CD4-positive, alpha-beta memory T cell (primary cell): ENCODE measurements at regions of chr1 and their contacts with region 1.

Region 1: DNA sequence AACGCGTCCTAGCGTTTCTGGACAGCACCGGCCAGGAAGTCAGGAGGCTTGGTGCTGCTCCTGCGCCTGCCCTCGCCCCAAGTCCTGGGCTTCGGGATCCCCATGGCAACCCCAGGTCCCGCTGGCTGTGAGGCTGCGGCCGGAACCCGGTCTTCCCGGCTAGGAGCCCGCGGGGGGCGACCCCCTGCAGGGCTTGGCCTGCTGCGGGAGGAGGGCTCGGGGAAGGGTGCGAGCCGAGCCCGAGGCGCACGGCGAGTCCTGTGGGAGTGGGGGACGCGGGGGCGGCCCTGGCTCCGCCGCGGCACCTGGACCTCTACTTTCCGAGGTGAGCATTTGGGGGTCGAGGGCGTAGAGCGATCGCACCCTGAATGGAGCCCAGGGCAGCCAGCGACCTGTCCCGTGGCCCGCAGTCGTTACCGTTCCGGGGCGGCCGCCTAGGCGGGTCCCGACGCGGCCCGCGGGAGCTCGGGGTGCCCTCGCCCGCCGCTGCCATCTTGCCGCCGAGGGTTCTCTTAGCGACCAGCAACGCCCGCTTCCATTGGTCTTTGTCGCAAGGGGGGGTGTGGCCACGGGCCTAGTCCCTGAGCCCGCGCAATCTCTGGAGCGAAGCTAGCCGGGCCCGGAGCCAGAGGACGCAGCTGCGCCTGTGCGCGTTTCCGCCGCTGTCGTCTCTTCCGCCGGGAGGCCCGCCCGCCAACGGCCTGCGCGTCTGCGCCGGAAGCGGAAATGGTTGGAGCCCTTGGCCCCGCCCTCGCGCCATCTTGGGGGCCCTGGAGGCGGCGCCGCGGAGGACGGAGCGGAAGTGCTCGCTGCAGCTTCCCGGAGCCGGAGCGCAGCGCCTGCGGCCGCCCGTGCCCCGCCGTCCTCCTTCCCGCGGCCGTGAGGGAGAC is at the starts of genes MORN1 and RER1:
- DNase-seq: peak; percentile 98 to 100 (median 99)
- H3K4me3 ChIP-seq: peak within 1 kb of the TSS; percentile 57 to 75
- H3K4me3 Mint-ChIP-seq: peak within 1 kb of the TSS; percentile 85 to 93 (median 90)
- H3K27ac ChIP-seq: peak within 1 kb of the TSS; percentile 76
- H3K27ac Mint-ChIP-seq: peak within 1 kb of the TSS; percentile 87 to 95 (median 93)
- H3K4me1 ChIP-seq: peaks cover 37% of the 10 kb centered on the region
- H3K4me1 Mint-ChIP-seq: peaks cover 20 to 49% (median 38%) of the 10 kb centered on the region in 4 donors
- H3K27me3 ChIP-seq: no peaks in the 10 kb centered on the region
- H3K27me3 Mint-ChIP-seq: no peaks in the 10 kb centered on the region
- total RNA-seq, gene MORN1: 12.5 to 15.3 TPM
- total RNA-seq, gene RER1: 149 to 151 TPM

Region 2: DNA sequence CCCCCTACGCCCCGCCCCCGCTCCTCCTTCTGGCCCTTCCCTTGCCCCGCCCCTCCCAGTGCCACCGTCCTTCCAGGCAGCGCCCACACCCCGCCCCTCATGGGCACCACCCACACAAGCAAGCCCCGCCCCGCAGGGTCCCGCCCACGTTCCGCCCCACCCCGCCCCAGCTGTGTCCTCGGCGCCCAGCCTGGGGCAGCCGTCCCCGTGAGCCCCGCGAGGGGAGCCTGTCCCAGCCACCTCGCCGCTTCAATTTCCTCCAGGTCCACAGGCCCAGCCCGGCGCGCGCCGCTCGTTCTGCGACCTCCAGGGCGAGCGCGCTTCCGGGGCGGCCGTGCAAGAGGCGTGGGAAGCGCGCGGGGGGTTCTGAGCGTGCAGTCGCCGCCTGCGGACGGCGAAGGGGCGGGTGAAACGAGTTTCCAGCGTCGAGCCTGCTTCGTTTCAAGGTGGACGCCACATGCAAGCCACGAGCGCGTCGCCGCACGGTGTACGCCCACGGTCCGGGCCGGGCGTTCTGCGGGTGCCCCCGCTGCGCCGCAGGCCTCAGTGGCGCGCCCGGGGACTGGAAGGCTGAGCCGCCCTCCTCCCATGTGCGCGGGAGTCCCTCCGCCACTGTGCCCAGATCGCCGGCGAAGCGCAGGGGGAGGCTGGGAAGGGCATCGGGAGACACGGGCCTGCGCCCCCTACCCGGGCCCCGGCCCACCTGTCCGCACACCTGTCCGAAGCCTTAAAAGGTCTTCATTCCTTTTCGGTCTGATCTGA is 185.9 kb before region 1 on chr1:
- CTCF ChIA-PET with region 1: no interaction called
- POLR2A ChIA-PET with region 1: interaction called, 19 read pairs
- intact Hi-C with region 1: loop called (anchors 1 kb)
- DNase-seq: peak; percentile 90 to 95 (median 91)
- H3K4me3 ChIP-seq: peak overlapping the region; percentile 6 to 47
- H3K4me3 Mint-ChIP-seq: peak overlapping the region; percentile 48 to 71 (median 68)
- H3K27ac ChIP-seq: peak overlapping the region; percentile 38
- H3K27ac Mint-ChIP-seq: peak overlapping the region in 3 of 7 donors; percentile 35 to 79 (median 62)
- H3K4me1 ChIP-seq: peaks cover 26% of the 10 kb centered on the region
- H3K4me1 Mint-ChIP-seq: peaks cover 0 to 15% (median 3%) of the 10 kb centered on the region in 4 donors
- H3K27me3 ChIP-seq: no peaks in the 10 kb centered on the region
- H3K27me3 Mint-ChIP-seq: no peaks in the 10 kb centered on the region

Region 3: DNA sequence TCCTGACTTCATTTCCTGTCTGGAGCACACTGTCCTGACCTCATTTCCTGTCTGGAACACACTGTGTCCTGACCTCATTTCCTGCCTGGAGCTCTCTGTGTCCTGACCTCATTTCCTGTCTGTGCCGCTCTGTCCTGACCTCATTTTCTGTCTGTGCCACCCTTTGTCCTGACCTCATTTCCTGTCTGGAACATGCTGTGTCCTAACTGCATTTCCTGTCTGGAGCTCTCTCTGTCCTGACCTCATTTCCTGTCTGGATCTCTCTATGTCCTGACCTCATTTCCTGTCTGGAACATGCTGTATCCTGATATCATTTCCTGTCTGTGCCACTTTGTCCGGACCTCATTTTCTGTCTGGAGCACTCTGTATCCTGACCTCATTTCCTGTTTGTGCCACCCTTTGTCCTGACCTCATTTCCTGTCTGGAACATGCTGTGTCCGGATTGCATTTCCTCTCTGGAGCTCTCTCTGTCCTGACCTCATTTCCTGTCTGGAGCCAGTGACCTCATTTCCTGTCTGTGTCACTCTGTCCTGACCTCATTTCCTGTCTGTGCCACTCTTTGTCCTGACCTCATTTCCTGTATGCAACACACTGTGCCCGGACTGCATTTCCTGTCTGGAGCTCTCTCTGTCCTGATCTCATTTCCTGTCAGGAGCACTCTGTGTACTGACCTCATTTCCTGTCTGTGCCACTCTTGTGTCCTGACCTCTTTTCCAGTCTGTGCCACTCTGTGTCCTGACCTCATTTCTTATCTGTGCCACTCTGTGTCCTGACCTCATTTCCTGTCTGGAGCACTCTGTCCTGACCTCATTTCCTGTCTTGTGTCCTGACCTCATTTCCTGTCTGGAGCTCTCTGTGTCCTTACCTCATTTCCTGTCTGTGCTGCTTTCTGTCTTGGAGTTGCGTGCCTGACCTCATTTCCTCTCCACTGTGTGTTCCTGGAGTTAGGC is 135.6 kb before region 1 on chr1:
- CTCF ChIA-PET with region 1: no interaction called
- POLR2A ChIA-PET with region 1: interaction called, 24 read pairs
- intact Hi-C with region 1: loop called (anchors 2 kb)
- DNase-seq: peak; percentile 87 to 96 (median 92)
- H3K4me3 ChIP-seq: no peak overlapping the region
- H3K4me3 Mint-ChIP-seq: no peak overlapping the region
- H3K27ac ChIP-seq: peak overlapping the region; percentile 95
- H3K27ac Mint-ChIP-seq: no peak overlapping the region
- H3K4me1 ChIP-seq: peaks cover 87% of the 10 kb centered on the region
- H3K4me1 Mint-ChIP-seq: peaks cover 31 to 59% (median 40%) of the 10 kb centered on the region in 4 donors
- H3K27me3 ChIP-seq: no peaks in the 10 kb centered on the region
- H3K27me3 Mint-ChIP-seq: no peaks in the 10 kb centered on the region

Region 4: GRCh38 chr1:2412519-2413233 is 21.4 kb after region 1 on chr1 and contains the start of gene PEX10:
- CTCF ChIA-PET with region 1: interaction called, 3 read pairs
- POLR2A ChIA-PET with region 1: interaction called, 25 read pairs
- intact Hi-C with region 1: loop called (anchors 1 kb)
- DNase-seq: peak; percentile 96 to 98 (median 97)
- H3K4me3 ChIP-seq: peak within 1 kb of the TSS; percentile 47 to 70
- H3K4me3 Mint-ChIP-seq: peak within 1 kb of the TSS; percentile 82 to 94 (median 87)
- H3K27ac ChIP-seq: peak within 1 kb of the TSS; percentile 84
- H3K27ac Mint-ChIP-seq: peak within 1 kb of the TSS; percentile 75 to 99 (median 92)
- H3K4me1 ChIP-seq: peaks cover 55% of the 10 kb centered on the region
- H3K4me1 Mint-ChIP-seq: peaks cover 17 to 51% (median 32%) of the 10 kb centered on the region in 4 donors
- H3K27me3 ChIP-seq: no peaks in the 10 kb centered on the region
- H3K27me3 Mint-ChIP-seq: no peaks in the 10 kb centered on the region
- total RNA-seq, gene PEX10: 11.7 to 13.0 TPM

Region 5: DNA sequence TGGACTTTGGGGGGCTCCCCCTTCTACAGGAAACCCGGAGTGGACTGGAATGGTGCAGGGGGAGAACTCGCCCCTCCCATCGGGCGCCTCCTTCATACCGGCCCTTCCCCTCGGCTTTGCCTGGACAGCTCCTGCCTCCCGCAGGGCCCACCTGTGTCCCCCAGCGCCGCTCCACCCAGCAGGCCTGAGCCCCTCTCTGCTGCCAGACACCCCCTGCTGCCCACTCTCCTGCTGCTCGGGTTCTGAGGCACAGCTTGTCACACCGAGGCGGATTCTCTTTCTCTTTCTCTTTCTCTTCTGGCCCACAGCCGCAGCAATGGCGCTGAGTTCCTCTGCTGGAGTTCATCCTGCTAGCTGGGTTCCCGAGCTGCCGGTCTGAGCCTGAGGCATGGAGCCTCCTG is 165.0 kb after region 1 on chr1 and contains the start of gene TNFRSF14:
- CTCF ChIA-PET with region 1: interaction called, 3 read pairs
- POLR2A ChIA-PET with region 1: interaction called, 11 read pairs
- intact Hi-C with region 1: no loop called
- DNase-seq: peak; percentile 77 to 88 (median 78)
- H3K4me3 ChIP-seq: peak within 1 kb of the TSS; percentile 95 to 98
- H3K4me3 Mint-ChIP-seq: peak within 1 kb of the TSS; percentile 92 to 99 (median 96)
- H3K27ac ChIP-seq: peak within 1 kb of the TSS; percentile 98
- H3K27ac Mint-ChIP-seq: peak within 1 kb of the TSS; percentile 95 to 100 (median 98)
- H3K4me1 ChIP-seq: peaks cover 43% of the 10 kb centered on the region
- H3K4me1 Mint-ChIP-seq: peaks cover 9 to 50% (median 30%) of the 10 kb centered on the region in 4 donors
- H3K27me3 ChIP-seq: no peaks in the 10 kb centered on the region
- H3K27me3 Mint-ChIP-seq: no peaks in the 10 kb centered on the region
- total RNA-seq, gene TNFRSF14: 170 to 173 TPM